Activated naive CD8-positive, alpha-beta T cell treated with anti-CD3 and anti-CD28 coated beads, Interleukin-2, amount 10 ng/mL, durations not matched to agents 7 days and 5 days (primary cell): ENCODE measurements at regions of chr20 and their contacts with region 1.

Region 1: DNA sequence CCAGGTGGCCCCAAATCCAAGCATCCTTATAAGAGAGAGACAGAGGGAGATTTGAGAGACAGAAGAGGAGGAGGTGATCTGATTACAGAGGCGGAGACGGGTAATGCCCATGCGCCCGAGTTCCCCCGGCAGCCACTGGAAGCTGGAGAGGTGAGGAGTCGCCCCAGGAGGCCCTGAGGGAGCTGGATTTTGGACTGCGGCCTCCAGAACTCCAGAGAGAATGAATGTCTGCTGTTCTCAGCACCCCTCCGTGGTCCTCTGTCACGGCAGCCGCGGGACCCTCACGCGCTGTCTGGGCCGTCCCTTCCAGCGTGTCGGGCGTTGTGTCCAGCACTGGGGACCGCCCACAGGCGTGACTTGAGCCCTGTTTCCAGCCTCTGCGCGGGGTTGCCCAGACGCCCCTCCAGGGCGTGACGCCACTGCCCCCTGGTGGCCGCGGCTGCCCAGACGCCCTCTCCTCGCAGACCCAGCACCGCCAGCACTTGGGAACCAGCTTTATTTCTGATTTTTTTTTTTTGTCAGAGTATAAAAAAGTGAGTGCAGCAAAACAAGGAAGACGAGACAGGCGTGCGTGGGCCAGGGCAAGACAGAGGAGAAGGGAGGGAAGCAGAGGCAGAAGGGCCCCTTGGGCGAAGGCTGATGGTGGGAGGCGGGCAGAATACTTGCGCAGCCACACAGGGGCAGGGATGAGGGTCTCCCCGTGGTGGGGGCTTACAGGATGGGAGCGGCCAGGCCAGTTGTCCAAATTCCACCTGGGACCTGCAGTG is 4.1 kb upstream of the ZNF512B start:
- DNase-seq: peak; percentile 91
- ATAC-seq: peak; percentile 44
- H3K4me3 Mint-ChIP-seq: no peak overlapping the region
- H3K27ac Mint-ChIP-seq: no peak overlapping the region
- H3K4me1 Mint-ChIP-seq: peaks cover 37% of the 10 kb centered on the region
- H3K27me3 Mint-ChIP-seq: peaks cover 4% of the 10 kb centered on the region

Region 2: GRCh38 chr20:63942250-63942959 is 31.4 kb before region 1 on chr20:
- POLR2A ChIA-PET with region 1: no interaction called
- DNase-seq: peak; percentile 71
- ATAC-seq: no peak
- H3K4me3 Mint-ChIP-seq: peak overlapping the region; percentile 63
- H3K27ac Mint-ChIP-seq: peak overlapping the region; percentile 90
- H3K4me1 Mint-ChIP-seq: peaks cover 14% of the 10 kb centered on the region
- H3K27me3 Mint-ChIP-seq: no peaks in the 10 kb centered on the region

Region 3: GRCh38 chr20:63955827-63956663 is 17.8 kb before region 1 on chr20 and contains the start of gene UCKL1:
- POLR2A ChIA-PET with region 1: interaction called, 14 read pairs
- DNase-seq: peak; percentile 93
- ATAC-seq: peak; percentile 79
- H3K4me3 Mint-ChIP-seq: peak within 1 kb of the TSS; percentile 83
- H3K27ac Mint-ChIP-seq: peak within 1 kb of the TSS; percentile 87
- H3K4me1 Mint-ChIP-seq: peaks cover 24% of the 10 kb centered on the region
- H3K27me3 Mint-ChIP-seq: no peaks in the 10 kb centered on the region
- total RNA-seq, gene UCKL1: 45.0 to 48.4 TPM